ENCODE measurements at regions of chr19 and their contacts with region 1.

Region 1: DNA sequence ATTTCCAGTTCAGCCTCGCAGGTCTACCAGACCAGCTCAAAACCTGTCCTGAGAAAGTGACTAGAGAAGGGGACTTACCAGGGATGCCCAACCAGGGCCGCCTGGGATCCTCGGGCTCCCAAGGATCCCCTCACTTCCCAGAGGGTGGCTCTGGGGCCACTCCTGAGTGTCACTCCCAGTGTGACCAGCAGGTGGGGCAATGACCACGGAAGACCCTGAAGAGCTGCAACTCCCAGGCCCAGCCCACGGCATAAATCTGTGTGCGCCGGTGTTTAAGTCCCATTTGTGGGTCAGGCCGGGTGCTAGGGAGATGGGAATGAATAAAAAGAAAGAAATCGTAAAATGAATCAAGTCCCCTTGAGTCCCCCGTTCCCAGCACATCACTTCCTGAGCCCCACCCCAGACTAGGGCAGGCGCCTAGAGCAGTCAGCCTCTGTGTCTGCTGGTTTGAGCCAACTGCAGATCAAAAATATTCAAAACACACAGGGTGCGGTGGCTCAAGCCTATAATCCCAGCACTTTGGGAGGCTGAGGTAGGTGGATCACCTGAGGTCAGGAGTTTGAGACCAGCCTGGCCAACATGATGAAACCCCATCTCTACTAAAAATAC is 10.7 kb downstream of the PTGIR start:
- DNase-seq: peak; percentile 68
- H3K4me3 Mint-ChIP-seq: peak overlapping the region; percentile 61
- H3K27ac Mint-ChIP-seq: peak overlapping the region; percentile 87
- H3K4me1 Mint-ChIP-seq: peaks cover 57% of the 10 kb centered on the region
- H3K27me3 Mint-ChIP-seq: no peaks in the 10 kb centered on the region

Region 2: GRCh38 chr19:46529622-46530462 is 84.4 kb before region 1 on chr19:
- intact Hi-C with region 1: loop called (anchors 5 kb)
- DNase-seq: peak; percentile 57
- H3K4me3 Mint-ChIP-seq: no peak overlapping the region
- H3K27ac Mint-ChIP-seq: no peak overlapping the region
- H3K4me1 Mint-ChIP-seq: peaks cover 14% of the 10 kb centered on the region
- H3K27me3 Mint-ChIP-seq: peaks cover under 1% of the 10 kb centered on the region

Region 3: GRCh38 chr19:46600384-46601317 is 13.6 kb before region 1 on chr19:
- intact Hi-C with region 1: loop called (anchors 1 kb)
- DNase-seq: peak; percentile 96
- H3K4me3 Mint-ChIP-seq: peak overlapping the region; percentile 93
- H3K27ac Mint-ChIP-seq: peak overlapping the region; percentile 100
- H3K4me1 Mint-ChIP-seq: peaks cover 18% of the 10 kb centered on the region
- H3K27me3 Mint-ChIP-seq: peaks cover 5% of the 10 kb centered on the region

Region 4: GRCh38 chr19:46661020-46661731 is 47.0 kb after region 1 on chr19 and contains the start of gene DACT3:
- intact Hi-C with region 1: loop called (anchors 1 kb)
- DNase-seq: peak; percentile 100
- H3K4me3 Mint-ChIP-seq: peak within 1 kb of the TSS; percentile 81
- H3K27ac Mint-ChIP-seq: peak within 1 kb of the TSS; percentile 80
- H3K4me1 Mint-ChIP-seq: peaks cover 19% of the 10 kb centered on the region
- H3K27me3 Mint-ChIP-seq: peaks cover 26% of the 10 kb centered on the region
- total RNA-seq, gene DACT3: 6.1 and 6.5 TPM in 2 replicates

Region 5: DNA sequence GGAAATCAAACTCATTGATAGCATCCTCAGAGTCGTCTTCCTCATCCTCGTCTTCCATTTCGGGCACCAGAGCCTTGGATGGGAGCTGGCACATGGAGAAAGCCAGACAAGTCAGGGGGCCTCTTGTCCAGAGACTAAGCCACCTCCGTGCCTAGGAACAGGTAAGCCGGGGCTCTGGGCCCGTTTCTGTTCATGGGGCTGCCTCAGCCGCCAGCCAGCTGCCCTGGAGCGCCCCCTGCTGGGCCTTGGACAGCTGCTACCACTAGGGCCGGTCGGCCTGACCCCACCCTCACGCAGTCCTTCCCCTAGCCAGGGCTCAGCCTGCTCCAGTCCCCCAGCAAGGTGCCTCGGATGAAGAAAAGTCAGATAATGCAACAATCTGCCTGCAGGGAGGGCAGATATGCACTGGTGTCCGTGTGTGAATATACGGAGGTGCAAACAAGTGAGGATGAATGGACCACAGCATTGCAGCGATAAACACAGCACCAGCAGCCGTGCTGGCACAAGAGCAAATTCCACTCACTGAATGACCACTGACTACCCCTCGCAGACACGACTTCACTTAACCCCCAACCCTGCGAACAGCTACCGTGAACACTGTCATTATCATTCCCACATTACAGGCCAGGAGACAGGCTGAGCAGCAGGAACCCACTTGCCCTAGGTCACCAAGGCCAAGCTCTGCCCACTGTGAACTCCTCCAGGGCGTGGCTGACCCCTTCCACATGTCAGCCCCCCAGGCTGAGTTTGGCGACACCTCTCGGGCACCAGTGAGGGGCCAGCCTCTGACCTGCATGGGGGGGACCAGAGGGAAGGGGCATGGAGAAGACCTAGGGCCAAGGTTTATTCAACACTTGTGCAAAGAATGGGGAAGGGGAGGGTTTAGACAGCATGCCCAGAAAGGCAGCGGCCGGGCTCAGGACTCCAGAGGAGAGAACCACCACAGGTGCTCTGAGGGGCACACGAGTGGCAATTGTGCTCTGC is 114.8 kb after region 1 on chr19:
- intact Hi-C with region 1: loop called (anchors 1 kb)
- DNase-seq: peak; percentile 68
- H3K4me3 Mint-ChIP-seq: no peak overlapping the region
- H3K27ac Mint-ChIP-seq: no peak overlapping the region
- H3K4me1 Mint-ChIP-seq: peaks cover 22% of the 10 kb centered on the region
- H3K27me3 Mint-ChIP-seq: no peaks in the 10 kb centered on the region

Region 6: GRCh38 chr19:46759817-46760333 is 145.7 kb after region 1 on chr19:
- intact Hi-C with region 1: no loop called
- DNase-seq: no peak
- H3K4me3 Mint-ChIP-seq: no peak overlapping the region
- H3K27ac Mint-ChIP-seq: no peak overlapping the region
- H3K4me1 Mint-ChIP-seq: no peaks in the 10 kb centered on the region
- H3K27me3 Mint-ChIP-seq: no peaks in the 10 kb centered on the region